ENCODE measurements at regions of chr13 and their contacts with region 1.

Region 1: GRCh38 chr13:75482070-75482819 is at the start of gene TBC1D4:
- DNase-seq: peak; percentile 89
- H3K4me3 ChIP-seq: peak within 1 kb of the TSS; percentile 83 to 93
- H3K27ac ChIP-seq: peak within 1 kb of the TSS; percentile 57 to 59
- H3K4me1 ChIP-seq: peaks cover 3 to 12% of the 10 kb centered on the region in 2 experiments; a peak in 3 of 4 replicates
- H3K27me3 ChIP-seq: no peaks in the 10 kb centered on the region
- CTCF ChIP-seq: peak; percentile 94
- EP300 ChIP-seq: peak in 1 of 2 experiments; percentile 45; a peak in 1 of 4 replicates
- RAD21 ChIP-seq: peak; percentile 69
- polyA plus RNA-seq, gene TBC1D4: 8.8 and 10.4 TPM in 2 replicates

Region 2: GRCh38 chr13:75353781-75354193 is 128.5 kb before region 1 on chr13:
- CTCF ChIA-PET with region 1: no interaction called
- POLR2A ChIA-PET with region 1: no interaction called
- DNase-seq: no peak
- H3K4me3 ChIP-seq: no peak overlapping the region
- H3K27ac ChIP-seq: no peak overlapping the region
- H3K4me1 ChIP-seq: peaks cover 2 to 9% of the 10 kb centered on the region in 2 experiments; a peak in 3 of 4 replicates
- H3K27me3 ChIP-seq: no peaks in the 10 kb centered on the region
- CTCF ChIP-seq: no peak
- EP300 ChIP-seq: no peak
- RAD21 ChIP-seq: no peak

Region 3: GRCh38 chr13:75372517-75372916 is 109.7 kb before region 1 on chr13:
- CTCF ChIA-PET with region 1: interaction called, 76 read pairs
- POLR2A ChIA-PET with region 1: no interaction called
- DNase-seq: peak; percentile 42
- H3K4me3 ChIP-seq: no peak overlapping the region
- H3K27ac ChIP-seq: no peak overlapping the region
- H3K4me1 ChIP-seq: peaks cover 4 to 11% of the 10 kb centered on the region in 2 experiments
- H3K27me3 ChIP-seq: no peaks in the 10 kb centered on the region
- CTCF ChIP-seq: peak; percentile 82
- EP300 ChIP-seq: no peak
- RAD21 ChIP-seq: peak; percentile 69

Region 4: GRCh38 chr13:75468098-75468497 is 14.1 kb before region 1 on chr13:
- CTCF ChIA-PET with region 1: interaction called, 24 read pairs
- POLR2A ChIA-PET with region 1: no interaction called
- DNase-seq: no peak
- H3K4me3 ChIP-seq: no peak overlapping the region
- H3K27ac ChIP-seq: no peak overlapping the region
- H3K4me1 ChIP-seq: no peaks in the 10 kb centered on the region; a peak in 1 of 4 replicates
- H3K27me3 ChIP-seq: no peaks in the 10 kb centered on the region
- CTCF ChIP-seq: no peak
- EP300 ChIP-seq: no peak
- RAD21 ChIP-seq: no peak

Region 5: DNA sequence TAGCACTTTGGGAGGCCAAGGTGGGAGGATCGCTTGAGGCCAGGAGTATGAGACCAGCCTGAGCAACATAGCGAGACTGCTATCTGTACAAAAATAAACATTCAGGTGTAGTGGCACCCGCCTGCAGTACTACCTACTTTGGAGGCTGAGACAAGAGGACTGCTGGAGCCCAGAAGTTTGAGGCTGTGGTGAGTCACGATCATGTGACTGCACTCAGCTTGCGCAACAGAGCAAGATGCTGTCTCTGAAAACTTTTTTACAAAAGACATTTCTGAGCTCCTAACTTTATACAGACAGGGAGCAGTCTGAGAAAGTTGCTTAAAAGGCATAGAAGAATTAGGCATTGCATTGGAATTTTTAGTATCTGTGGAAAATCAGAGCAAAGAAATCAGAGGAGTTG is 10.1 kb after region 1 on chr13:
- CTCF ChIA-PET with region 1: interaction called, 21 read pairs
- POLR2A ChIA-PET with region 1: no interaction called
- DNase-seq: no peak
- H3K4me3 ChIP-seq: no peak overlapping the region
- H3K27ac ChIP-seq: no peak overlapping the region
- H3K4me1 ChIP-seq: no peaks in the 10 kb centered on the region; a peak in 1 of 4 replicates
- H3K27me3 ChIP-seq: no peaks in the 10 kb centered on the region
- CTCF ChIP-seq: no peak
- EP300 ChIP-seq: no peak
- RAD21 ChIP-seq: no peak

Region 6: GRCh38 chr13:75537401-75538365 is 55.4 kb after region 1 on chr13 and contains the start of gene COMMD6:
- CTCF ChIA-PET with region 1: interaction called, 10 read pairs
- POLR2A ChIA-PET with region 1: no interaction called
- DNase-seq: peak; percentile 91
- H3K4me3 ChIP-seq: peak within 1 kb of the TSS; percentile 93 to 96
- H3K27ac ChIP-seq: peak within 1 kb of the TSS; percentile 75 to 80
- H3K4me1 ChIP-seq: peaks cover 0 to 11% of the 10 kb centered on the region in 2 experiments; a peak in 2 of 4 replicates
- H3K27me3 ChIP-seq: no peaks in the 10 kb centered on the region
- CTCF ChIP-seq: no peak
- EP300 ChIP-seq: peak in 1 of 2 experiments; percentile 36; a peak in 1 of 4 replicates
- RAD21 ChIP-seq: peak; percentile 24; the same call in 1 of the 2 replicates
- polyA plus RNA-seq, gene COMMD6: 73.7 and 76.9 TPM in 2 replicates

Region 7: GRCh38 chr13:75566658-75567057 is 84.4 kb after region 1 on chr13:
- CTCF ChIA-PET with region 1: no interaction called
- POLR2A ChIA-PET with region 1: no interaction called
- DNase-seq: peak; percentile 15
- H3K4me3 ChIP-seq: no peak overlapping the region
- H3K27ac ChIP-seq: no peak overlapping the region
- H3K4me1 ChIP-seq: peaks cover 7 to 11% of the 10 kb centered on the region in 2 experiments; a peak in 2 of 4 replicates
- H3K27me3 ChIP-seq: no peaks in the 10 kb centered on the region
- CTCF ChIP-seq: peak; percentile 73
- EP300 ChIP-seq: no peak
- RAD21 ChIP-seq: peak; percentile 63

Region 8: DNA sequence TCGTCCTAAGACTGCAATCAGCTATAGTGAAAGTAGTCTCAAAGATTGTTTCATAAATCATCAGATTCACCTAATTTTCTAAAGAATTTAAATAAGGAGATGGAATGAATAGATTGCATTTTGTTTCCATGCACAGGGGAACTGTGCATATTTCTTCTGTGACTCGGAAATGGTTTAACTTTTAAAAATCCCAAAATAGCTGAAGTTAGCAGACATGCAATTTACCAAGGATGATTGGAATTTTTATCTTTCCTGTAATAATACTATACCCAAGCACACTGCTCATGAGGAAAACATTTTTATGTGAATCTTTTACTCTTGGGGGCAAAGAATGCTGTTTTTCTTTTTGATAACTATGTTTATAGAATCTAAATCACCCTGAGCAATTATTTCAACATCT is 138.9 kb after region 1 on chr13:
- CTCF ChIA-PET with region 1: no interaction called
- POLR2A ChIA-PET with region 1: no interaction called
- DNase-seq: no peak
- H3K4me3 ChIP-seq: peak overlapping the region in 1 of 2 experiments; percentile 8; a peak in 1 of 4 replicates
- H3K27ac ChIP-seq: peak overlapping the region; percentile 78 to 81; a peak in 3 of 4 replicates
- H3K4me1 ChIP-seq: peaks cover 0 to 33% of the 10 kb centered on the region in 2 experiments; a peak in 2 of 4 replicates
- H3K27me3 ChIP-seq: no peaks in the 10 kb centered on the region
- CTCF ChIP-seq: no peak
- EP300 ChIP-seq: peak; percentile 33 to 98
- RAD21 ChIP-seq: no peak

Region 9: GRCh38 chr13:76481738-76482137 is 999.5 kb after region 1 on chr13:
- CTCF ChIA-PET with region 1: no interaction called
- POLR2A ChIA-PET with region 1: no interaction called
- DNase-seq: no peak
- H3K4me3 ChIP-seq: no peak overlapping the region
- H3K27ac ChIP-seq: no peak overlapping the region
- H3K4me1 ChIP-seq: no peaks in the 10 kb centered on the region
- H3K27me3 ChIP-seq: 0 out of 2 replicates have a peak, but pooled peaks cover 6% of the 10 kb centered on the region
- CTCF ChIP-seq: no peak
- EP300 ChIP-seq: no peak
- RAD21 ChIP-seq: no peak